Mammary epithelial cell (primary cell): ENCODE measurements at regions of chr4 and their contacts with region 1.

Region 1: GRCh38 chr4:31370866-31371465 is 650.8 kb downstream of the PCDH7 start:
- DNase-seq: peak; percentile 12
- H3K4me3 ChIP-seq: no peak overlapping the region
- H3K27ac ChIP-seq: no peak overlapping the region
- H3K4me1 ChIP-seq: no peaks in the 10 kb centered on the region
- H3K27me3 ChIP-seq: no peaks in the 10 kb centered on the region
- CTCF ChIP-seq: peak; percentile 66 to 84

Region 2: DNA sequence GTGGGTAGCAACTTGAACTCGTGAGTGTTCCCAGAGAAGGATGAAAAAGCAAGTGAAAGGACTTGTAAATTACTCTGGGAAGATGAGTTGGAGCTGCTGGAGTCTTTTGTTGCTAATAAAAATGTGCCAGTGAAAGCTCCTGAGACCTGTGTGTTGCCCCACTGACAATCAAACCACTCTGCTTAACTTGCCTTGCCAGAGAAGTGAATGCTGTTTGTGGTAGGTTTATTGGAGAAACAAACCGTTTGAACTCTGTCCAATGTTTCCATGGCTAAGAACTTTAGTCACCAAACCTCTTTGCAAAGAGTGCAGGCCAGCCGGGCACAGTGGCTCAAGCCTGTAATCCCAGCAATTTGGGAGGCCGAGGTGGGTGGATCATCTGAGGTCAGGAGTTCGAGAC is 63.9 kb before region 1 on chr4:
- CTCF ChIA-PET with region 1: no interaction called
- dilution Hi-C with region 1: no loop called
- in situ Hi-C with region 1: no loop called
- intact Hi-C with region 1: no loop called
- DNase-seq: no peak
- H3K4me3 ChIP-seq: no peak overlapping the region
- H3K27ac ChIP-seq: no peak overlapping the region
- H3K4me1 ChIP-seq: no peaks in the 10 kb centered on the region
- H3K27me3 ChIP-seq: no peaks in the 10 kb centered on the region
- CTCF ChIP-seq: no peak

Region 3: DNA sequence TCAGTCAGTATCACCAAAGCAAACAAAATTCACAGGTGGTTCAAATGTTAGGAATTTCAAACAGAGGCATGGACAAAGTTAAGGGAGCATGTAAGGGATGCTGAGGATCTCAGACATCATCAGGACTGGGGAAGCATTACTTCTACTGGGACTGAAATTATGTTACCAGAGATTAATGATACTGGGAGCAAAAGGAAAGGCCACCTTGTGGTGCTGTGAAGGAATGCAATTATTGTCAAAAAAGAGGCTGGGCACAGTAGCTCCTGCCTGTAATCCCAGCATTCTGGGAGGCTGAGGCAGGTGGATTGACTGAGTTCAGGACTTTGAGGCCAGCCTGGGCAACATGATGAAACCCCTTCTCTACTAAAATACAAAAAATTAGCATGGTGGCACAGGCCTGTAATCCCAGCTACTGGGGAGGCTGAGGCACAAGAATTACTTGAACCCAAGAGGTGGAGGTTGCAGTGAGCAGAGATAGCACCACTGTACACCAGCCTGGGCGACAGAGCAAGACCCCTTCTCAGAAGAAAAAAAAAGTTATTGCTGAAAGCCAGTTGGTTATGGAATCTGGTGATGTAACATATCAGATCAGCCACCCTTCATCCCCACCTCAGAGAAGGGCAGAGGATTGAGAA is 303.5 kb after region 1 on chr4:
- CTCF ChIA-PET with region 1: no interaction called
- dilution Hi-C with region 1: no loop called
- in situ Hi-C with region 1: no loop called
- intact Hi-C with region 1: loop called (anchors 1 kb)
- DNase-seq: no peak
- H3K4me3 ChIP-seq: no peak overlapping the region
- H3K27ac ChIP-seq: no peak overlapping the region
- H3K4me1 ChIP-seq: no peaks in the 10 kb centered on the region
- H3K27me3 ChIP-seq: no peaks in the 10 kb centered on the region
- CTCF ChIP-seq: peak; percentile 39 to 73

Region 4: GRCh38 chr4:32268863-32269262 is 897.9 kb after region 1 on chr4:
- CTCF ChIA-PET with region 1: no interaction called
- dilution Hi-C with region 1: no loop called
- in situ Hi-C with region 1: no loop called
- intact Hi-C with region 1: loop called (anchors 2 kb)
- DNase-seq: peak; percentile 4
- H3K4me3 ChIP-seq: no peak overlapping the region
- H3K27ac ChIP-seq: no peak overlapping the region
- H3K4me1 ChIP-seq: no peaks in the 10 kb centered on the region
- H3K27me3 ChIP-seq: no peaks in the 10 kb centered on the region
- CTCF ChIP-seq: peak; percentile 19 to 45